ENCODE measurements at regions of chr11 and their contacts with region 1.

Region 1: DNA sequence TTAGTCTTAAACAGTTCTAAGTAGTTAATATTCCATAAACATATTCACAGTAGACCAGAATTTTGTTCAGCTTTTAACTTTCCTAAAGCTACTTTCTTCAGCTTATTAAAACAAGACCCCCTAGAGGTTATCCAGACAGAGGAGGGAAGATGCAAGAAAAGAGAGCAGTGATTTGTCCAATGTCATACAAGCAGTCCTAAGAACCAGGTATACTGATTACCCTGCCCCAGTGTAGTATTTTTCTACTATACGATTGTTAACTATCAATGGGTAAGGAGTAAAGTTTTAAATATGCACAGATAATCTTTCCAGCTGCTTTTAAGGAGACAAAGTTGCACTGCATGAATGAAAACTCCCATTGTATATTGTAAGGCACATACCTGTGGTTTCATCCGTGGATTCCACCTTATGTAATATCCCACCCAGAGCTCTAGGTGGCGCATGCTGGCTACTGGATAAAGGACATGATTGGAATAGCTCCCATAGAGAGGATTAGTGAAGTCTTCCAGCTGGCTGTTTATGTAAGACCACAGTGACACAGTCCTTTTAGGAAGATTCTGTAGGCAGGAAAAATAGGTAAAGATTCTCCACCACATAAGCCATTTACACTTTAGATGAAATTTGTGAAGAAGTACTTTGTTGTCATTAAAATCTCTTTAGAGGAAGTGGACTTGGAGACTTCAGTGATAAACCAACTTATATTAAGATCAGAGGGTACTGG is 45.6 kb downstream of the CEP57 start:
- DNase-seq: peak; percentile 84 to 85
- H3K4me3 ChIP-seq: no peak overlapping the region
- H3K4me3 Mint-ChIP-seq: no peak overlapping the region
- H3K27ac Mint-ChIP-seq: no peak overlapping the region
- H3K4me1 ChIP-seq: no peaks in the 10 kb centered on the region; the same call in 1 of the 2 replicates
- H3K4me1 Mint-ChIP-seq: peaks cover 6% of the 10 kb centered on the region
- H3K27me3 ChIP-seq: no peaks in the 10 kb centered on the region
- H3K27me3 Mint-ChIP-seq: no peaks in the 10 kb centered on the region
- CTCF ChIP-seq: peak; percentile 97 to 98

Region 2: DNA sequence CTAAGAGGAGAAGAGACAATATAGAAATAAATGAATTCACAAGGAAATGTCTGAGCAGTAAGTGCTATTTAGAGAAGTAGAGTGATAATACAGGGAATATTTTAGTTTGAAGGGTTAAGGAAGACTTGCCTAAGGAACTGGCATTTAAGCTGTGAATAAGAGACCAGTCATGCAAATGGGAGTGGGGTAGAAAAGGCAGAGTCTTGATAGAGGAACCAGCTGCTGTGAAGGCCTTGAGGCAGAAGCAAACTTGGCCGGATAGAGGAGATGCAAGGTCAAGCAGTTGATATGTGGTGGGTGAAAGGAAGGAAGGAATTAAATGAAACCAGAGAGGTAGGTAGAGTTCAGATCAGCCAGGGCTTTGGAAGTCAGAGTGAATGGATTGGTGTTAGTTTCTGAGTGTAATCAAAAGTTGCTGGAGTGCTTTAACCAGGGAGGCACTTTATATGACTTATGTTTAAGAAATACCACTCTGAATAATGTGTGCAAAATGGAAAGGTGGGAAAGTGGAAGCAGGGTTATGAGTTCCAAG is 406.5 kb before region 1 on chr11:
- CTCF ChIA-PET with region 1: no interaction called
- POLR2A ChIA-PET with region 1: no interaction called
- intact Hi-C with region 1: no loop called
- DNase-seq: no peak
- H3K4me3 ChIP-seq: no peak overlapping the region
- H3K4me3 Mint-ChIP-seq: no peak overlapping the region
- H3K27ac Mint-ChIP-seq: no peak overlapping the region
- H3K4me1 ChIP-seq: no peaks in the 10 kb centered on the region
- H3K4me1 Mint-ChIP-seq: no peaks in the 10 kb centered on the region
- H3K27me3 ChIP-seq: no peaks in the 10 kb centered on the region
- H3K27me3 Mint-ChIP-seq: peaks cover 5% of the 10 kb centered on the region
- CTCF ChIP-seq: no peak

Region 3: DNA sequence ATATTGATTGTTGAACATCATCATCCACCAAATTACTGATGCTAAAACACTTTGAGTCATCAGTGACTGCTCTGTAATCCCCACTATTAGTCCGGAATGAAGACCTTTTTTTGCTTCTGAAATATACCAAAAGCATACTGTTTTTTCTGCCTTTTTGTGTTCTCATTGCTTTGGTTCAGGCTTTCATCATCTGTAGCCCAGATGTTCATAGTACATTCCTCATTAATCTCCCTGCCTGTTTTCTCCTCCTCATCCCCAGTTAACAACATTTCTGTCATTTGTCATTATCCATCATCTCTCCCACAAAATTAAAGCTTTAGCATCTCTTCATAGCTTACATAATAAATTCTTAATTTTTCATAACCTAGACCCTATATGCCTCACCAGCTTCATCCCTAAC is 36.4 kb before region 1 on chr11:
- CTCF ChIA-PET with region 1: no interaction called
- POLR2A ChIA-PET with region 1: no interaction called
- intact Hi-C with region 1: no loop called
- DNase-seq: no peak
- H3K4me3 ChIP-seq: no peak overlapping the region
- H3K4me3 Mint-ChIP-seq: no peak overlapping the region
- H3K27ac Mint-ChIP-seq: no peak overlapping the region
- H3K4me1 ChIP-seq: no peaks in the 10 kb centered on the region
- H3K4me1 Mint-ChIP-seq: no peaks in the 10 kb centered on the region
- H3K27me3 ChIP-seq: no peaks in the 10 kb centered on the region
- H3K27me3 Mint-ChIP-seq: no peaks in the 10 kb centered on the region
- CTCF ChIP-seq: no peak

Region 4: GRCh38 chr11:95948637-95949036 is 112.7 kb after region 1 on chr11:
- CTCF ChIA-PET with region 1: no interaction called
- POLR2A ChIA-PET with region 1: no interaction called
- intact Hi-C with region 1: no loop called
- DNase-seq: no peak
- H3K4me3 ChIP-seq: no peak overlapping the region
- H3K4me3 Mint-ChIP-seq: no peak overlapping the region
- H3K27ac Mint-ChIP-seq: no peak overlapping the region
- H3K4me1 ChIP-seq: no peaks in the 10 kb centered on the region
- H3K4me1 Mint-ChIP-seq: no peaks in the 10 kb centered on the region
- H3K27me3 ChIP-seq: no peaks in the 10 kb centered on the region
- H3K27me3 Mint-ChIP-seq: no peaks in the 10 kb centered on the region
- CTCF ChIP-seq: no peak

Region 5: DNA sequence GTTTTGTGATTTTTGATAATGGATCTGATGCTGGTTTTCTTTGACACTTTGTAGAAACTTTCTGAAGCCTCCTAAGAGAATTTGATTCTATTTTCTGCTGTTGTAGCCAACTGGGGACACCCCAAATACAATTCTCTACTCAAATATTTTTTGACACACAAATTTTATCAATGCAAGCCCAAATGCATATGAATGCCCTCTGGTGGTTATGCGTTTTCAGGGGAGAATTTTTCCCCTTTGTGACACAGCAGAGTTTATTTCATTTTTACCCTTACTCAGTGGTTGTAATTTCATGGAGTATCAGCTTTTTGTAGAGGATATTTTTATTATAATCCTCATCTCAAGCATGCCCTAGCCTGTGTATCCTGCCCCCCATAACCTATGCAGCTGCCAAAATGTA is 132.7 kb after region 1 on chr11:
- CTCF ChIA-PET with region 1: interaction called, 3 read pairs
- POLR2A ChIA-PET with region 1: no interaction called
- intact Hi-C with region 1: loop called (anchors 1 kb)
- DNase-seq: peak in 1 of 2 experiments; percentile 30
- H3K4me3 ChIP-seq: no peak overlapping the region
- H3K4me3 Mint-ChIP-seq: no peak overlapping the region
- H3K27ac Mint-ChIP-seq: no peak overlapping the region
- H3K4me1 ChIP-seq: no peaks in the 10 kb centered on the region
- H3K4me1 Mint-ChIP-seq: no peaks in the 10 kb centered on the region
- H3K27me3 ChIP-seq: no peaks in the 10 kb centered on the region
- H3K27me3 Mint-ChIP-seq: no peaks in the 10 kb centered on the region
- CTCF ChIP-seq: peak; percentile 58 to 62

Region 6: DNA sequence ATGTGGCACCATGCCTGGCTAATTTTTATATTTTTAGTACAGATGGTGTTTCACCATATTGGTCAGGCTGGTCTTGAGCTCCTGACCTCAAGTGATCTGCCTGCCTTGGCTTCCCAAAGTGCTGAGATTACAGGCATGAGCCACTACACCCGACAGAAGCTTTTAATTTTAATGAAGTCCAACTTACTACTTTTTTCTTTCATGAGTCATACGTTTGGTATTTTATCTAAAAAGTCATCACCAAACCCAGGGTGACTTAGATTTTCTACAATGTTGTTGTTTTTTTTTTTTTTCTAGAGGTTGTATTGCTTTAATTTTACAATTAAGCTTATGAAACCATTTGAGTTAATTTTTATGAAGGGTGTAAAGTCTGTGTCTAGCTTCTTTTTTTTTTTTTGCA is 588.8 kb after region 1 on chr11:
- CTCF ChIA-PET with region 1: interaction called, 10 read pairs
- POLR2A ChIA-PET with region 1: no interaction called
- intact Hi-C with region 1: loop called (anchors 1 kb)
- DNase-seq: no peak
- H3K4me3 ChIP-seq: no peak overlapping the region
- H3K4me3 Mint-ChIP-seq: no peak overlapping the region
- H3K27ac Mint-ChIP-seq: no peak overlapping the region
- H3K4me1 ChIP-seq: peaks cover 5% of the 10 kb centered on the region; the same call in 1 of the 2 replicates
- H3K4me1 Mint-ChIP-seq: no peaks in the 10 kb centered on the region
- H3K27me3 ChIP-seq: no peaks in the 10 kb centered on the region; the same call in 1 of the 2 replicates
- H3K27me3 Mint-ChIP-seq: peaks cover 19% of the 10 kb centered on the region
- CTCF ChIP-seq: no peak